ENCODE measurements at regions of chr7 and their contacts with region 1.

Region 1: DNA sequence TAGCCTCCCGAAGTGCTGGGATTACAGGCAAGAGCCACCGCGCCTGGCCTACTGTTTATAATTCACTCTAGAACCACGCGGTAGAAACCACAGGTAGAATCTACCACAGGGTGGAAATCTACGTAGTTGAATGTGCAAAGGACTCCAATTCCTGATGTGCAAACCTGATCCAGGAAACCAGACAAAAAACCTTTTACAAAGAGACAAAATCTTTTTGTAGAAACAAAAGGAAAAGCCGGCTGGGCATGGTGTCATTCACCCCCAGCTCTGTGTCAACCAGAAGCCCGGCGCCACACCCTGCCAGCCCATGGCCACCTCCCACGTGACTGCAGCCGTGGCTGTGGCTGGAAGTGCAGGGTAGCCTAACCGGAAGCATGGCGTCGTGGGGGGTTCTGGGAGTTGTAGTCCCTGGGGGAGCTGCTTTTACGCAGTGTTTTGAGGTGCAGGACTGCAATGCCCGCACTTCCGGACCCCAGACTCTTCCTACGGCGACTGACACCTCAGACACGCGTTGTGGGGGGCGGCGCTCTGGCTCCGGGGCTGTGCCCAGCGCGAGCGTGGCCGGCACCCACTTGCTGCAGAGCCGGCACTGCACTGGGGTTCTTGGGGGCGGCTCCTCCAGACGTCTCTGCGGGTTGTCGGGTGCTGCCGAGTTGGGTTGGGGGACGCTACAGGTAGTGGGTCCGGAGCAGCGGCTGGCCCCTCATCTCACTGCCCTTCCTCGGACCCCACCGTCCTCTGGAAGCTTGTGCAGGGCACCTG is 41.5 kb upstream of the RNF216 start:
- DNase-seq: peak; percentile 96 to 99 (median 99)
- H3K4me3 ChIP-seq: peak overlapping the region; percentile 88
- H3K4me3 Mint-ChIP-seq: peak overlapping the region; percentile 74 to 95 (median 91)
- H3K27ac ChIP-seq: peak overlapping the region; percentile 79
- H3K27ac Mint-ChIP-seq: peak overlapping the region; percentile 79 to 99 (median 96)
- H3K4me1 ChIP-seq: peaks cover 24% of the 10 kb centered on the region
- H3K4me1 Mint-ChIP-seq: peaks cover 26 to 35% (median 29%) of the 10 kb centered on the region in 3 donors
- H3K27me3 ChIP-seq: no peaks in the 10 kb centered on the region
- H3K27me3 Mint-ChIP-seq: no peaks in the 10 kb centered on the region

Region 2: DNA sequence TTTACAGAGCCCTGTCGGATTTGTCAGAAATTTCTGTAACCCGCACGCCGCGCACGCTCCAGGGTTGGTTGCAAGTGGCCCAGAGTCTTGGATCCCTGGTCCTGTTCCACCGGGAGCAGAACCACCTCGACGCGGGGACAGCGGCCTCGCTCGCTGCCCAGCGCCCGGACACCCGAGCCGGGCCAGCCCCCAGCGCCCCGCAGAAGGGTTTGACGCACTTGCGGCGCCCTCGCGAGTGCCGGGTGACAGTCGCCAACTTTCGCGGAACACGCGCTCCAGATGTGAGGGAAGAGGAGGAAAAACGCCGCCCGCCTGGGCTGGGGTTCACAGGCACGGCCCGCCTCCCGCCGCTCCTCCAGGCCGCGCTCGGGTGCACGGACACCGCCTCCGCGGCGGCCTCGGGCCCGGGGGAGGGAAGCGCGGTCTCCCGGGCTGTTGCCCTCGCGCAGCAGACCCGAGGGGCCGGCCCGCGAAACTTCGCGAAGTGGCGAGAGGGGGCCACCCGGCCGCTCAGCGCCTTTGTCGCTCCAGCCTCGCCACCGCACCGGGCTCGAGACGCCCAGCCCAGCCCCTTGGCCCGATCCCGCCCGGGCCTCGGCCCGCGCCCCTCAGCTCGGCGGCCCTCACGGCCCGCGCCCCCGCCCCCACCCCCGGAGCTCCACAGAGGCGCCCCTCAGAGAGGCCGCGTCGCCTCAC is 42.0 kb before region 1 on chr7:
- CTCF ChIA-PET with region 1: interaction called, 16 read pairs
- POLR2A ChIA-PET with region 1: interaction called, 17 read pairs
- DNase-seq: peak in 2 of 5 donors; percentile 14 to 16
- H3K4me3 ChIP-seq: peak overlapping the region; percentile 49
- H3K4me3 Mint-ChIP-seq: peak overlapping the region; percentile 78 to 94 (median 86)
- H3K27ac ChIP-seq: peak overlapping the region; percentile 79
- H3K27ac Mint-ChIP-seq: peak overlapping the region; percentile 84 to 96 (median 90)
- H3K4me1 ChIP-seq: peaks cover 33% of the 10 kb centered on the region
- H3K4me1 Mint-ChIP-seq: peaks cover 36 to 45% (median 42%) of the 10 kb centered on the region in 3 donors
- H3K27me3 ChIP-seq: no peaks in the 10 kb centered on the region
- H3K27me3 Mint-ChIP-seq: no peaks in the 10 kb centered on the region